Activated B cell treated with CpG ODN at 0.5 μM for 24 hours (primary cell): ENCODE measurements at regions of chr17 and their contacts with region 1.

Region 1: DNA sequence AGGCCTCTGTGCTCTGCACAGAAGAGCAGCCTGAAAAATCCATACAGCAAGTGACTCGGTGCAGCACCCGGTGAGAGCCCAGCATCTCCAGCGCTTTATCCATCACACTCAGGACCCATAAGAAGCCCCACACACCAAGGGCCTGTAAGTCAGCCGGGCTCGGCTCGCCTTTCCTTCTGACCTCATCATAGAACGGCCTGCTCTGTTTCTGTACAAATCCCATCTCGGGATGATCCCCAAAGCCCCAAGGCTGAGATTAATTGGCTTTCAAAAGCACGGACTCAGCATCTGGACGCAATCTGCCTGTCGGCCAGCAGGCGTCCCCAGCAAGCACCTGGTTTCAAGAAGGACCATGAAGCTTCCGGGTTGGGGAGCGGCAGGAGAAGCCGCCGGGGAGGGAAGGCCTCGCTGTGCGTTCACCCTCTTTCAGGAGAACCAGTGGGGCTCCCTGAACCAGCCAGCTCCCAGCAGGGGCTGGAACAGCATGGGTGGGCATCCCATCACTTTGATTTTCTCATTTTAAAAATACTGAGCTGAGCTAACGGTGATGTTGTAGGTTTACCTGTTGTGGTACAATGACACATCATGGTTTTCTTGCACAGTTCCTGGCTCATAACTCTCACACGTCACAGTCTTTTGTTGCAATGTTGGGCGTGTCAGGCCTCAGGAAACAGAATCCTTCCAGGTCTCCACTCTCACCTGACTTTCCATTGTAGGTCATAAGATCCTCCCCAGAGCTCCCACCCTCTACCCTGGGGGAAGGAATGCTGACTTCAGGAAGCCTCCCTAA is 6.7 kb downstream of the CCDC57 start:
- DNase-seq: peak; percentile 71
- ATAC-seq: peak; percentile 99
- H3K4me3 Mint-ChIP-seq: peak overlapping the region; percentile 44
- H3K27ac Mint-ChIP-seq: peak overlapping the region; percentile 86
- H3K4me1 Mint-ChIP-seq: peaks cover 15% of the 10 kb centered on the region
- H3K27me3 Mint-ChIP-seq: no peaks in the 10 kb centered on the region
- CTCF ChIP-seq: peak; percentile 31

Region 2: DNA sequence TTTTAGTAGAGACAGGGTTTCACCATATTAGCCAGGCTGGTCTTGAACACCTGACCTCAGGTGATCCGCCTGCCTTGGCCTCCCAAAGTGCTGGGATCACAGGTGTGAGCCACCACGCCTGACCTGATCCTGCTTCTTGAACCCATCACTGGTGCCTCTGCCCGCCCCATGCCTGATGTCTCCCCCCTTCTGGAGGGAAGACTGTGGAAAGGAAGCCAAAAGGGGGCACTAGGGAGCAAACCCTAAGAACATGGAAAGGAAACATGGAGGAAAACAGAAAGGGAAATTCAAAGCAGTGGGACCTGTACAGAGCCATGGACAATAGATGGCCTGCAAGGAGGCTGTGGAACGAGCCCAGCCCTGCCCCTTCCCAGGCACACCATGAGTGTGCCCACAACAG is 76.8 kb before region 1 on chr17:
- CTCF ChIA-PET with region 1: no interaction called
- POLR2A ChIA-PET with region 1: no interaction called
- intact Hi-C with region 1: no loop called
- DNase-seq: no peak
- ATAC-seq: no peak
- H3K4me3 Mint-ChIP-seq: no peak overlapping the region
- H3K27ac Mint-ChIP-seq: no peak overlapping the region
- H3K4me1 Mint-ChIP-seq: no peaks in the 10 kb centered on the region
- H3K27me3 Mint-ChIP-seq: no peaks in the 10 kb centered on the region
- CTCF ChIP-seq: no peak

Region 3: DNA sequence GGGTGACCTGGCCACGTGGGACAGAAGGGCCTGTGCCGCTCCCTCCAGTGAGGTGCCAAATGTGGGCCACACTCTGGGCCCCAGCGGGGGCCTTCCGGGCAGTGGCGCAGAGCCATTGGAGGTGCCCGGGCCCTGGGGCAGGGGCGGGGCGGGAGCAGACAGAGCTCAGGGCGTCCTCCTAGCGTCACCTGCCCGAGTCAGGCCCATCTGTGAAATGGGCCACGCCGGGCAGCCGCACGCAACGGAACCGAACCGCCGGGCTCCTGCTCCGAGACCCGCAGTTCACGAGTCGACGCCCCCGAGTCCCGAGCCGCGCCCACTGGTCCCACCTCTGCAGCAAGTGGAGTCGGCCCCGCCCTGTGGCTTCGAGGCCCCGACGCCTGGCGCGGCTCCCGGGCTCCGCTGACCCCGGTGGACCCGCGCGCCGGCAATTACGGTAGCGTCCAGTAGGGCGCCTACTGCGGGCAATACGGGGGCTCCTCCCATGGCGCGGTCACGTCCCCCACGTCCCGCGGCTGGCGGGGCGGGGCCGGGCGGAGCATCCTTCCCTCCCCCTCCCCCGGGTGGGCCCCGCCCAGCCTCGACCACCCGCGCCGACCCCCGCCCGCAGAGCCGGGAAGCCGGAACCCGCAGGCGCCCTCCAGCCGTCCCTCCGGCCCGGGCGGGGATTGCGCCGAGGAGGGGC is 24.9 kb after region 1 on chr17:
- CTCF ChIA-PET with region 1: interaction called, 17 read pairs
- POLR2A ChIA-PET with region 1: interaction called, 18 read pairs
- intact Hi-C with region 1: loop called (anchors 1 kb)
- DNase-seq: peak; percentile 68
- ATAC-seq: peak; percentile 49
- H3K4me3 Mint-ChIP-seq: peak overlapping the region; percentile 78
- H3K27ac Mint-ChIP-seq: no peak overlapping the region
- H3K4me1 Mint-ChIP-seq: peaks cover 33% of the 10 kb centered on the region
- H3K27me3 Mint-ChIP-seq: no peaks in the 10 kb centered on the region
- CTCF ChIP-seq: no peak

Region 4: GRCh38 chr17:82236142-82236981 is 30.4 kb after region 1 on chr17:
- CTCF ChIA-PET with region 1: interaction called, 17 read pairs
- POLR2A ChIA-PET with region 1: interaction called, 12 read pairs
- intact Hi-C with region 1: no loop called
- DNase-seq: peak; percentile 58
- ATAC-seq: peak; percentile 64
- H3K4me3 Mint-ChIP-seq: no peak overlapping the region
- H3K27ac Mint-ChIP-seq: no peak overlapping the region
- H3K4me1 Mint-ChIP-seq: peaks cover 53% of the 10 kb centered on the region
- H3K27me3 Mint-ChIP-seq: no peaks in the 10 kb centered on the region
- CTCF ChIP-seq: no peak

Region 5: DNA sequence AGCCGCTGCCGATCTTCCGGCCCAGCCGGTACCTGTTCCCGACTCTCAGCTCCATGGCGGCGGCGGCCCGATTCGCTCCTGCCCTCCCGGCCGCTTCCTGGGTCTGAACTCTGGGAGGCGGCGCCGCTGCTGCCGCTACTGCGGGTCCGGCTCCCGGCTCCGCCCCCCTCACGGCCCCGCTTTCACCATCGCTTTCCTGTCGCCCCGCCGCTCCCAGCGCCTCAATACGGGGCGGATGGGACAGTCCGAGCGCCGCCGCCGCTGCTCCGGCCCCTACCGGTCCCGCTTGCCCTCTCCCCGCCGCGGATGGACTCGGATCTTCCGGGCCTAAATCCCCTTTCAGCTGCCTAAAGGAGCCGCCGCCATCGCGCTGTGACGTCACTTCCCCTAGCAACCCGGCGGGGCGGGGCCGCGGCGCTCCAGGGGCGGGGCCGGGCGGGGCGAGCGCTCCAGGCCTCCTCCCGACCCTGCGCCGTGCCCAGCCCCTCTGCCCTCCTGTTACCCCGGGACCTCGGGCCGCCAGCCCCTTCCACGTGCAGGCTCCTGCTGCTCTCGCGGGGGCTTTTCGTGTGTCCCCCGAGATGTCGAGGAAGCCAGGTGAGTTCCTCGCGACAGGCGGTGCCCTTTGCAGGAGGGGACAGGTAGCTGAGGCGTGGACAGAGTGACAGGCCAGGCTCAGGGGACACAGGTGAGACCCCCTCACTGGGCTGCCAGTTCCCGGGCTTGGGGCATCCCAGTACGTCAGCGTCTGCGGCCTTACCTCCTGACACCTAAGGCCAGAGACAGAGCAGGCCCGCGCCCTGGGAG is 67.6 kb after region 1 on chr17 and contains the start of gene CSNK1D:
- CTCF ChIA-PET with region 1: no interaction called
- POLR2A ChIA-PET with region 1: interaction called, 7 read pairs
- intact Hi-C with region 1: loop called (anchors 2 kb)
- DNase-seq: peak; percentile 97
- ATAC-seq: peak; percentile 83
- H3K4me3 Mint-ChIP-seq: peak within 1 kb of the TSS; percentile 94
- H3K27ac Mint-ChIP-seq: peak within 1 kb of the TSS; percentile 97
- H3K4me1 Mint-ChIP-seq: peaks cover 45% of the 10 kb centered on the region
- H3K27me3 Mint-ChIP-seq: no peaks in the 10 kb centered on the region
- CTCF ChIP-seq: no peak
- total RNA-seq, gene CSNK1D: 147 and 170 TPM in 2 replicates

Region 6: DNA sequence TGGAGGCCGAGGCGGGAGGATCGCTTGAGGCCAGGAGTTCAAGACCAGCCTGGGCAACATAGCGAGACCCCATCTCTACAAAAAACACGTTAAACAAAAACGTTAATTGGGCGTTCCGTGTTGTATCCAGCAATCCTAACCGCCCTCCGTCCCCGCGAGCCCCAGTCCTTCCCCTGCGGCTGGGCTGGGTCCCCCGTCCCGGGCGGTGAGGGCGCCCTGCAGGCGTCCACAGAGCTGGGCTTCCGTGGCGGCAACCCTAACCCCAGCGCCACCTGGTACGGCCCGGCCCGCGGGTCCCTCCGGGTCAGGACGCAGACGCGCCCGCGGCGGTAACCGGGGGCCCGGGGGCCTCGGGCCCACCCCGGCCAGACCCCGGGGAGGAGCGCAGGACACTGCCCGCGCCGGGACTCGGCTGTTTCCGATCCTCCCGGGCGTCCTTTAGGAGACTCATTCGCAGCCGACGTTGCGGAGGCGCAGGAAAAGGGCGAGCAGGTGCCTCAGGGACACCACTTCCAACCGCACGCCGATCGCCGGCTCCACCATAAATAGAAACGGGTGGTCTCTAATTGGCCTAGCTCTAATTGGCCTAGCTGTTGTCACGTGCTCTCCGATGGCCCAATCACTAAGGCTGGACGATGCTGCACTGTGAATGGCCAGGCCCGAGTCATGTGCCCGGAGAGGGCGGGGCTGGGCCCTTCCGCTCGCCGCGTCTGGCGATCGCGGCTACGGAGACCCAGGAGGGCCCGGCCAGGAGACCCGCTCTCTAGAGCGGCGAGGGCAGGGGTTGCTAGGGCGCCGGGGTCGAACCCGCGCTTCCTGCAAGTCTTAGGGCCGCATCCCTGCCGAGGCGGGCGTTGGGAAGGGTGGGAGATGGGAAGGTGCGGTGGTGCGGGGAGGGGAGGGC is 86.6 kb after region 1 on chr17:
- CTCF ChIA-PET with region 1: interaction called, 7 read pairs
- POLR2A ChIA-PET with region 1: interaction called, 28 read pairs
- intact Hi-C with region 1: no loop called
- DNase-seq: peak; percentile 81
- ATAC-seq: peak; percentile 91
- H3K4me3 Mint-ChIP-seq: peak overlapping the region; percentile 87
- H3K27ac Mint-ChIP-seq: peak overlapping the region; percentile 84
- H3K4me1 Mint-ChIP-seq: peaks cover 38% of the 10 kb centered on the region
- H3K27me3 Mint-ChIP-seq: no peaks in the 10 kb centered on the region
- CTCF ChIP-seq: no peak

Region 7: GRCh38 chr17:82309656-82310570 is 104.0 kb after region 1 on chr17:
- CTCF ChIA-PET with region 1: no interaction called
- POLR2A ChIA-PET with region 1: no interaction called
- intact Hi-C with region 1: no loop called
- DNase-seq: no peak
- ATAC-seq: no peak
- H3K4me3 Mint-ChIP-seq: no peak overlapping the region
- H3K27ac Mint-ChIP-seq: no peak overlapping the region
- H3K4me1 Mint-ChIP-seq: peaks cover 6% of the 10 kb centered on the region
- H3K27me3 Mint-ChIP-seq: peaks cover 17% of the 10 kb centered on the region
- CTCF ChIP-seq: no peak

Region 8: DNA sequence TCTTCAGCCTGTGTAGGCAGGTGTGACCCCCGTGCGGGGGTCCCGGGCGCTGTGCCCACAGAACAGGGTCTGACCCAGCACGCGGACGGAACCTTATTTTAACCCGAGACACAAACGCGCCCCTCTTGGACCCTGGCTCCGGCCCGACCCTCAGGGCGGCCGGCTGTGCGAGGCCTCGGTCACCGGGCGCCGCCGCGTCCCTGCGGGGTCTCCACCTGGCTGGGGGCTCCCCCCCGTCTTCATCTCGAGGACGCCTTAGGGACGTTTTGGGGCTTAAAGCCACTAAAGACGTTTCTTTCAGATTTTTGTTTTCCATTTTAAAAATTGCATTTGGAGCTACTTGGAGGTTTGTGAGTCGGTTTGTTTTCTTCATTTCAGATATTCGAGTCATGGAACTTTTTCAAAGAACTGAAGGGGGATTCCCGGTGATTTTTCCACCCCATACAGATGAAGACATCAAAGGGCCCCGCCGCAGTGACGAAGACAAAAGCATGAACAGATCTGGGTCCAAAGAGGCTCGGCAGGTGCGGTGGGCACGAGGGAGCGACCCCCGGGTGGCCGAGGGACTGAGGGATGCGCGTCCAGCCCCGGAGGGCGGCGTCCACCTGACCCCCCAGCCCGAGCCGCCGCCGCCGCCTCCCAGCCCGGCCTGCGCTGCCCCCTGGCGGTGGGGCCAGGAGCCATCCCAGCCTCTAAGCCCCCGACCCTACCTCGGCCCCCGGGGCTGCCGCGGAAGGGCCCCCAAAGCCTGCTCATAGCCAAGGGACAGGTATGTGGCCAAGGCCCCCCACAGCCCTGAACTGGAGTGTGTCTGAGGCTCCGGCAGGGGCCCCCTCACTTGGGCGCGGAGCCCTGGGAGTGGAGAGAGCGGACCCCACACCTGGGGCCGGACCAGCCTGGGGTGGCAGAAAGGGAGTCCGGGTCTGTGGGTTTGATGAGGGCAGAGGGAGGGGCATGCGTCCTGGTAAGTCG is 115.3 kb after region 1 on chr17:
- CTCF ChIA-PET with region 1: interaction called, 4 read pairs
- POLR2A ChIA-PET with region 1: interaction called, 8 read pairs
- intact Hi-C with region 1: loop called (anchors 1 kb)
- DNase-seq: peak; percentile 76
- ATAC-seq: peak; percentile 81
- H3K4me3 Mint-ChIP-seq: peak overlapping the region; percentile 73
- H3K27ac Mint-ChIP-seq: peak overlapping the region; percentile 56
- H3K4me1 Mint-ChIP-seq: peaks cover 3% of the 10 kb centered on the region
- H3K27me3 Mint-ChIP-seq: peaks cover 6% of the 10 kb centered on the region
- CTCF ChIP-seq: peak; percentile 48

Region 9: GRCh38 chr17:82396601-82397470 is 190.9 kb after region 1 on chr17:
- CTCF ChIA-PET with region 1: no interaction called
- POLR2A ChIA-PET with region 1: no interaction called
- intact Hi-C with region 1: no loop called
- DNase-seq: no peak
- ATAC-seq: no peak
- H3K4me3 Mint-ChIP-seq: no peak overlapping the region
- H3K27ac Mint-ChIP-seq: no peak overlapping the region
- H3K4me1 Mint-ChIP-seq: peaks cover 7% of the 10 kb centered on the region
- H3K27me3 Mint-ChIP-seq: no peaks in the 10 kb centered on the region
- CTCF ChIP-seq: no peak